ENCODE measurements at regions of chr7 and their contacts with region 1.

Region 1: DNA sequence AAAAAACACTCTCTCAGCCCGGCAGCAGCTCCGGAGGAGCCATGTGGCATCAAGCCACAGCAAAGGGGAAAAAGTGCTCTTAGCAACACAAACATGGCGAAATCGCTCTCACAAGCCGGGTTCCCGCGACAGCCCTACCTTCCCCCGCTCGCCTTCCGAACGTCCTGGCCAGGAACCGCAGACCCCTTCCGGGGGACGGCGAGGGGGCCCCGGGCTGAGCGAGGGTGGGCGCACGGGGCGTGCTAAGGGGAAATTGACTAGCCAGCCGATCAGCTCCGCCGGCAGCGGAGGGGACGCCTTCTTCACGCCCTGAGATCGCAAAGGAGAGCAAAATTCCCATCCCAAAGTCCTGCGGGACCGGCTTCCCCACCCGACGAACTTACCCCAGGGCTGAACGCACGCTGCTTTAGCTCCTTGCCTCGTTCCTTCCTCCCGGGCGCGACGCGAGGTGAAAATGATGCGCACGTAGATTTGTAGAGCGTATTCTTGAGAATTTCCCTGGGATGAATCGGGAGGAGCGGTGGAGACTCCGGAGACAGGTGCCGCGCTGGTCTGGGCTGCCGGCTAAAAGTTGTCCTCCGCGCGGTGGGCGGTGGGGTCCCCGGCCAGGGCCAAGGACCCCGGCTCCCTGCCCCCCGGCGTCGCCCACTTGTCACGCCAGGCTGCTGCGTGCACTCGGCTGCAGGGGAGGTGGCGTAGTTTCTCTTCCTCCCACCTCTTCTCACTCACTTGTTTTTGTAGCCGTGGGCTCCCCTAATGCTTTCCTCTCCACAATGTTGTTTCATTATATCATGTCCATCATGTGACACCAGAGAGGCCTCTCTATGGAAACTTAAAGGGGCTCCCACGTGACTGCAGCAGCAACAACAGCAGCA is 220.1 kb upstream of the MKLN1 start:
- DNase-seq: peak; percentile 84 to 90
- ATAC-seq: peak; percentile 53 to 65
- H3K4me3 ChIP-seq: peak overlapping the region; percentile 78 to 97 (median 94)
- H3K27ac ChIP-seq: peak overlapping the region; percentile 95 to 100 (median 98)
- H3K4me1 ChIP-seq: peaks cover 31 to 35% of the 10 kb centered on the region in 2 donors
- H3K27me3 ChIP-seq: no peaks in the 10 kb centered on the region
- CTCF ChIP-seq: peak in 2 of 5 experiments; percentile 12 to 36
- POLR2A ChIP-seq: peak; percentile 86 to 99

Region 2: DNA sequence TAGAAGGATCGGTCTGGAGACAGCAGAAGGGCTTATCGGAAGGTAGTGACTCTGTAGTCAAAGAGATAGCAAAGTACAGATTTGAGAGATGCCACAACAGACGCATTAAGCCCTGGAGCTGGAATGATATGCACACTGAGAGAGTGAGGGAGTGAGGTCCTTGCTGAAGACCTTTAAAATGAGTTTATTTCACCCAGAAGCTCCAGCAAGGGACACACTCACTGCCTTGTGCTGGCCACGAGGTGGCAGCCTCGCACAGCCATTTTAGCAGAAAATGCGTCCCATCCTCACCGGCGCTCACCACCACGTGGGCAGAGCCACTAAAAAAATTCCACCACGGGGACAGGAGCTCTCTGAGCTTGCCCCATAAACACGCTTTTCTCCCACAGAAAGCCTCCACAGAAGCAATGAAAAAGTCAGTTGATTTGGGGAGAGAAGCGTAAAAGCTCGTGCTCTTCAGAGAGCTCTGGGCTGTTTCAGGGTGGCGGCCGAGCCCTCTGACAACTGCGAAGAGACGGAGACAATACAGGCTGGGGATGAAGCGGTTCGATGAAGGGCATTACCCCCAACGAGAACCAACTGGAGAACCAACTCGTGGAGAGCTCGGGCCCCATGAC is 210.6 kb before region 1 on chr7:
- in situ Hi-C with region 1: no loop called
- intact Hi-C with region 1: loop called (anchors 5 kb)
- DNase-seq: peak in 1 of 2 donors; percentile 76
- ATAC-seq: peak; percentile 7 to 15
- H3K4me3 ChIP-seq: peak overlapping the region in 1 of 4 donors; percentile 5
- H3K27ac ChIP-seq: peak overlapping the region; percentile 91 to 97 (median 94)
- H3K4me1 ChIP-seq: peaks cover 94 to 95% of the 10 kb centered on the region in 2 donors
- H3K27me3 ChIP-seq: no peaks in the 10 kb centered on the region
- CTCF ChIP-seq: peak; percentile 73 to 87 (median 84)
- POLR2A ChIP-seq: no peak

Region 3: DNA sequence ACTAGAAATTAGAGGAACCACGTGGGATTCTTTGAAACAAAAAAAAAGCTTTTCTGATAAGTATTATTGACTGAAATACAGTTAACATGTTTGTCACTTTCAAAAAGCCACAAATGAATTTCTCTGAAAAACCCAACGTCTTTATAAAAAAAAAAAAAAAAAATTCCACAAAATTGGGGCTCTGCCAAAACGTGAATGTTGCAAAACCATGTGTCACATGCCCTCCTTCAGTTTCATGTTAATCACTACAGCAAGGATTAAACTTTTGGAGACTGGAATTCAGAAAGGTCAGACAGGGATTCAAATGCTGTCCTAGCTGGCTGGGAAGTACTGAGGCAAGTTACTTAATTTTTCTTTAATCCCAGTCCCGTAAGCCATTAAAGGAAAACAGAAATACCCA is 95.6 kb before region 1 on chr7:
- in situ Hi-C with region 1: no loop called
- intact Hi-C with region 1: loop called (anchors 5 kb)
- DNase-seq: no peak
- ATAC-seq: peak; percentile 55 to 66
- H3K4me3 ChIP-seq: peak overlapping the region in 1 of 4 donors; percentile 23
- H3K27ac ChIP-seq: peak overlapping the region; percentile 68 to 78 (median 75)
- H3K4me1 ChIP-seq: peaks cover 97 to 98% of the 10 kb centered on the region in 2 donors
- H3K27me3 ChIP-seq: no peaks in the 10 kb centered on the region
- CTCF ChIP-seq: no peak
- POLR2A ChIP-seq: no peak

Region 4: GRCh38 chr7:131190146-131190545 is 82.6 kb after region 1 on chr7:
- in situ Hi-C with region 1: no loop called
- intact Hi-C with region 1: loop called (anchors 1 kb)
- DNase-seq: peak; percentile 34 to 55
- ATAC-seq: no peak
- H3K4me3 ChIP-seq: no peak overlapping the region
- H3K27ac ChIP-seq: peak overlapping the region; percentile 82 to 95 (median 88)
- H3K4me1 ChIP-seq: peaks cover 18 to 57% of the 10 kb centered on the region in 2 donors
- H3K27me3 ChIP-seq: no peaks in the 10 kb centered on the region
- CTCF ChIP-seq: no peak
- POLR2A ChIP-seq: no peak

Region 5: GRCh38 chr7:131284702-131285419 is 177.3 kb after region 1 on chr7:
- in situ Hi-C with region 1: loop called in 1 of 4 experiments (anchors 10 kb)
- intact Hi-C with region 1: no loop called
- DNase-seq: peak; percentile 90 to 93
- ATAC-seq: peak; percentile 92 to 94
- H3K4me3 ChIP-seq: peak overlapping the region in 1 of 4 donors; percentile 25
- H3K27ac ChIP-seq: peak overlapping the region; percentile 83 to 97 (median 92)
- H3K4me1 ChIP-seq: peaks cover 23 to 41% of the 10 kb centered on the region in 2 donors
- H3K27me3 ChIP-seq: no peaks in the 10 kb centered on the region
- CTCF ChIP-seq: peak in 1 of 5 experiments; percentile 8
- POLR2A ChIP-seq: no peak

Region 6: DNA sequence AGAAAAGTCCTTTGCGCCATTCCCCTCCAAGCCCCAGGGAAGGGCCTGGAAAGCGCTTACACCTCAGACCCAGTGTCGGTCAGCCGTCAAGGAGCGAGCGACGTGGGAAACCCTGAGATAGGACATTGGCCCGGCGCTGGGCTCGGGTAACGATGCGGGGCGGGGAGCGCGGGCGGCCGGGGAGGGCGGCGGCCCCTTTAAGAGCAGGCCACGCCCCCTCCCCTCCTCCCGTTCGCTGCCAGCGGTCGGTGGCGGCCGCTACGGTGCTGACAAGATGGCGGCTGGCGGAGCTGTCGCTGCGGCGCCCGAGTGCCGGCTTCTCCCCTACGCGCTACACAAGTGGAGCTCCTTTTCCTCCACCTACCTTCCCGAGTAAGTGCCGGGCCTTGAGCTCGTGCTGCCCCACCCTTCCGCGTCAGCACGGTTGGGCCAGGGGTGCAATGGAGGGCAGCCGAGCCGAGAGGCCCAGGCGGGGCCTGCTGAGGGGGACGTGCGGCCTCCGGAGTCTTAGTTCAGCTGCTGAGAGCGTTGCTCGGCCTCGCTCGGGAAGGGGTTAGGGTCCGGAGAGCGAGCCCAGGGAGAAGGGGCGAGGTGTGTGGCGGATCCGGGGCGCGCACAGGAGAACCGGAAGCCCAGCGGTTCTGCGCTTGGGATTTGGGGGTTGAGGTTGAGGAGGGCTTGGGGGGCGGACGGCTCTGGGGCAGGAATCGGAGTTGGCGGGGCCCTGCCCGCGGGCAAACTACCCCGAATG is 220.2 kb after region 1 on chr7 and contains the start of gene MKLN1:
- in situ Hi-C with region 1: no loop called
- intact Hi-C with region 1: loop called (anchors 1 kb)
- DNase-seq: peak; percentile 89 to 91
- ATAC-seq: peak; percentile 88 to 92
- H3K4me3 ChIP-seq: peak within 1 kb of the TSS; percentile 94 to 100 (median 98)
- H3K27ac ChIP-seq: peak within 1 kb of the TSS; percentile 98 to 100 (median 100)
- H3K4me1 ChIP-seq: peaks cover 46 to 49% of the 10 kb centered on the region in 2 donors
- H3K27me3 ChIP-seq: no peaks in the 10 kb centered on the region
- CTCF ChIP-seq: no peak
- POLR2A ChIP-seq: peak; percentile 75 to 86
- total RNA-seq, gene MKLN1: 29.1 to 81.1 (median 48.9) TPM

Region 7: DNA sequence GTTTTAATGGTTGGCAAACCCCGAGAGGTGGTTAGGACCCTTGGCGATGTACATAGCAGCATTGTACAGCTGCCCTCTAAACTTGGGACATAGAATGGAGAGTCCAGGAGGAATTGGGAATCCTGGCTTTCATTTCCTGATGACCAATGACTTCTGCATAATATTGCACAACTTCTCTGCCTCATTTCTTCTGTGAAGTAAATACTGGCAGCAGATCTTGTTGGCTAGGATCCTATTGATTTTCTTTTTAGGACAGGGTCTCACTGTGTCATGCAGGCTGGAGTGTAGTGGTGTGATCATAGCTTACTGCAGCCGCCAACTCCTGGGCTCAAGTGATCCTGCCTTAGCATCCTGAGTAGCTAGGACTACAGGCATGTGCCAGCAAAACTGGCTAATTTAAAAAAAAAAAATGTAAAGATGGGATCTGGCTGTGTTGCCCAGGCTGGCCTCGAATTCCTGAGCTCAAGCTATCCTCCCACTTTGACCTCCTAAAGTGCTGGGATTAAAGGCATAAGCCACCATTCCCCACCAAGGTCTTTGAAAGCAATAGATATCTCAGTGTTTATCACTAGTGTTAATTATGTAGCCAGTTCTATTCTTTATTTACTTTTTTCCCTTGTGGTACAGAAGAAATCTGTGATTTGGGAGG is 390.8 kb after region 1 on chr7:
- in situ Hi-C with region 1: no loop called
- intact Hi-C with region 1: loop called (anchors 10 kb)
- DNase-seq: no peak
- ATAC-seq: peak in 1 of 2 donors; percentile 24
- H3K4me3 ChIP-seq: no peak overlapping the region
- H3K27ac ChIP-seq: peak overlapping the region; percentile 33 to 62 (median 49)
- H3K4me1 ChIP-seq: peaks cover 7 to 27% of the 10 kb centered on the region in 2 donors
- H3K27me3 ChIP-seq: no peaks in the 10 kb centered on the region
- CTCF ChIP-seq: no peak
- POLR2A ChIP-seq: no peak

Measured in gastrocnemius medialis (tissue), 4 donors.